T-cell (primary cell): ENCODE measurements at regions of chr1 and their contacts with region 1.

Region 1: GRCh38 chr1:82273816-82274215 is 473.1 kb downstream of the ADGRL2 start:
- DNase-seq: no peak
- ATAC-seq: no peak
- H3K4me3 ChIP-seq: no peak overlapping the region
- H3K4me3 Mint-ChIP-seq: no peak overlapping the region
- H3K27ac ChIP-seq: no peak overlapping the region
- H3K27ac Mint-ChIP-seq: no peak overlapping the region
- H3K4me1 ChIP-seq: no peaks in the 10 kb centered on the region
- H3K4me1 Mint-ChIP-seq: no peaks in the 10 kb centered on the region
- H3K27me3 ChIP-seq: no peaks in the 10 kb centered on the region
- H3K27me3 Mint-ChIP-seq: no peaks in the 10 kb centered on the region

Region 2: DNA sequence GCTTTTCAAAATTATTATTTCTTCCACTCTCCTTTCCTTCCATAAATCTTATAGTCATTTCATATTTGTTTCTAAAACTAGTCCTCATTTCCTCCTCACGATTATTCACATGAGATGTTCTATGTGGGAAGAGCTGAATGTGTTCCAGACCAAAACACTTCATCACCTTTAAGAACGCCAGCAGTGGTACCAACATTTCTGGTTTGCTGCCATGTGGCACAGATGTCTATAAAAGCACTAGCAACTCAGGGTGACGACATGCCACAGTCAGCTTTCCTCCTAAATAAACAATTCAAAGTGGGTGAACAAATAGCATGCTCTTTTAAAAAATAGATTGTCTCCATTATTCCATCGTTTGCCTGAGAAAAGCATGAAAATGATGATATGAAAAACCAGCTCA is 1690.8 kb before region 1 on chr1:
- CTCF ChIA-PET with region 1: interaction called in 1 of 2 experiments, 10 read pairs
- POLR2A ChIA-PET with region 1: no interaction called
- DNase-seq: no peak
- ATAC-seq: no peak
- H3K4me3 ChIP-seq: no peak overlapping the region
- H3K4me3 Mint-ChIP-seq: no peak overlapping the region
- H3K27ac ChIP-seq: no peak overlapping the region
- H3K27ac Mint-ChIP-seq: no peak overlapping the region
- H3K4me1 ChIP-seq: no peaks in the 10 kb centered on the region
- H3K4me1 Mint-ChIP-seq: no peaks in the 10 kb centered on the region
- H3K27me3 ChIP-seq: no peaks in the 10 kb centered on the region
- H3K27me3 Mint-ChIP-seq: no peaks in the 10 kb centered on the region

Region 3: GRCh38 chr1:82260051-82260450 is 13.8 kb before region 1 on chr1:
- CTCF ChIA-PET with region 1: no interaction called
- POLR2A ChIA-PET with region 1: no interaction called
- DNase-seq: no peak
- ATAC-seq: no peak
- H3K4me3 ChIP-seq: no peak overlapping the region
- H3K4me3 Mint-ChIP-seq: no peak overlapping the region
- H3K27ac ChIP-seq: no peak overlapping the region
- H3K27ac Mint-ChIP-seq: no peak overlapping the region
- H3K4me1 ChIP-seq: no peaks in the 10 kb centered on the region
- H3K4me1 Mint-ChIP-seq: no peaks in the 10 kb centered on the region
- H3K27me3 ChIP-seq: no peaks in the 10 kb centered on the region
- H3K27me3 Mint-ChIP-seq: no peaks in the 10 kb centered on the region